ENCODE measurements at regions of chr17 and their contacts with region 1.

Region 1: DNA sequence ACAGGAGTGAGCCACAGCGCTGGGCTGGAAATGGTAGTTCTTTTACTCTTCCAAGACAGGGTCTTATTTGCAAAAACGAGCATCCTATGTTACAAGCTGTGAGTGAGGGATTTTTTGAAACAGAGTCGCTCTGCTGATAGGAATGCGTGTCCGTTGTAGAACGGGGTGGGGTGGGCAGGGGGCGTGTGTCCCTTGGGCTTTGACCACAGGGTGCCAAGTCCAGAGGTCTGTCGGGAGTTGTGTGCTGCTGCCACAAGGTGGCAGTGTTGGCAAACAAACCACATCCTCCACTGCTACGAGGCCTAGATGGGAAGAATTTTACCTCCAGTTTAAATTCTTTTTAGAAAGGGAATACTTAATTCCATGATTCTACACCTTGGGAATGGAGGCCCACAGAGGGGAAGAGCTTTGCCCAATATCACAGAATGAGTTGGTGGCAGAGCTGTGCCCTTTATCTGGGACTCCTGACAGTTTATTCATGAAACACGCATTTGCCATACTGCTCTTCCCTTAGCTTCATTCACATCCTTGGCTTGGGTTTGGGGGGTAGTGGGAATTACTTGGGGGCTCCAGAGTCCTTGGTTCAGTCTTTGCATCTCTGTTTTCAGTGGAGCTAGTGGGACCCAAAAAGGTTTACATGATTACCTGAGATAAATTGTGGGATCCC is 30.6 kb upstream of the ETV4 start:
- DNase-seq: peak; percentile 52
- ATAC-seq: peak; percentile 83
- H3K4me3 ChIP-seq: no peak overlapping the region
- H3K27ac ChIP-seq: no peak overlapping the region
- H3K4me1 ChIP-seq: peaks cover 19% of the 10 kb centered on the region
- H3K27me3 ChIP-seq: no peaks in the 10 kb centered on the region
- CTCF ChIP-seq: peak; percentile 84

Region 2: GRCh38 chr17:43546319-43547188 is 30.1 kb before region 1 on chr17 and contains the start of gene ETV4:
- CTCF ChIA-PET with region 1: no interaction called
- POLR2A ChIA-PET with region 1: no interaction called
- in situ Hi-C with region 1: no loop called
- intact Hi-C with region 1: no loop called
- DNase-seq: no peak
- ATAC-seq: peak; percentile 90
- H3K4me3 ChIP-seq: peak within 1 kb of the TSS; percentile 54 to 63
- H3K27ac ChIP-seq: no peak within 1 kb of the TSS
- H3K4me1 ChIP-seq: peaks cover 9% of the 10 kb centered on the region; the same call in 1 of the 2 replicates
- H3K27me3 ChIP-seq: no peaks in the 10 kb centered on the region
- CTCF ChIP-seq: no peak
- total RNA-seq, gene ETV4: 8.3 TPM

Region 3: DNA sequence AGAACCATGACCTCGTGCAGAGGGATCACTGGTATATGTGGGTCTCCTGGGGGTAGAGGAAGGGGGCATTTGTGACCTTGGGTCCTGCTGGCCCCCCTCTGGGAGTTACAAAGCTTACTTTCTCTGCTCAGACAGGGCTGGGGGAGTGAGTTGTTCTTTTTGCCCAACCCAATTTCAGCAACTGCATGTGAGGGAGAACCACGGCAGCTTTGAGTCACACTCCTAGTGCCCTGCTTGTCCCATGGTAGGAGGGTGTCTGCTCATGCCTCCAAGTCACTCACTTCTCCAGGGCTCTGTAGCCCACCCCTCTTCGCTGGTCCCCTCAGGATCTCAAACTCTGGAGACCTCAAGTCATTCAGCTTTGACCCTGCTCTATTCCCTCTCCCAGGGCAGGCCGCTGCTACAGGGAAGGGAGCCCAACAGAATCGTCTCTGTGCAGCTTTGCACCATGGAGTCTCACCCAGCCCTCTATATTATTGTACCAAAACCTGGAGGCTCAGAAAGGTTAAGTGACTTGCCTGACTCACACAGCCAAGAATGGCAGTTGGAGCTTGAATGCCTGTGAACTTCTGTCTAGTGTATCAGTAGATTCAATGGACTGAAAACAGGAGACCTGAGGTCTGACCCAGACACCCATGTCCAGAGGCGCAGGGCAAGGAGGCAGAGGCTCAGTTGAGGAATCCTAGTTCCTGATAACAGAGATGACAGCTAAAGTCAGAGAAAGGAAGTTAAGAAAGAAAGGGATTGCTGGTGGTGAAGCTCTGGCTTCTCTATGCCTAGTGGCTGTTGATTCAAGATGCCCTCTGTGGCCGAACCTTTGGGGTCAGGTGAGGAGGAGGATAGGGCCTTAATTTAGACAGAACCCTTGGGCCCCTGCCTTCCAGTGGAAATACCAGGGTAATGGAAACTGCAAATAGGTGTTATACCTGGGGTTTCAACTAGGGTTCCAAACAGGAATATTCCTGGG is 16.0 kb before region 1 on chr17:
- CTCF ChIA-PET with region 1: no interaction called
- POLR2A ChIA-PET with region 1: interaction called, 10 read pairs
- in situ Hi-C with region 1: no loop called
- intact Hi-C with region 1: no loop called
- DNase-seq: no peak
- ATAC-seq: no peak
- H3K4me3 ChIP-seq: no peak overlapping the region
- H3K27ac ChIP-seq: no peak overlapping the region
- H3K4me1 ChIP-seq: no peaks in the 10 kb centered on the region
- H3K27me3 ChIP-seq: no peaks in the 10 kb centered on the region
- CTCF ChIP-seq: no peak

Region 4: DNA sequence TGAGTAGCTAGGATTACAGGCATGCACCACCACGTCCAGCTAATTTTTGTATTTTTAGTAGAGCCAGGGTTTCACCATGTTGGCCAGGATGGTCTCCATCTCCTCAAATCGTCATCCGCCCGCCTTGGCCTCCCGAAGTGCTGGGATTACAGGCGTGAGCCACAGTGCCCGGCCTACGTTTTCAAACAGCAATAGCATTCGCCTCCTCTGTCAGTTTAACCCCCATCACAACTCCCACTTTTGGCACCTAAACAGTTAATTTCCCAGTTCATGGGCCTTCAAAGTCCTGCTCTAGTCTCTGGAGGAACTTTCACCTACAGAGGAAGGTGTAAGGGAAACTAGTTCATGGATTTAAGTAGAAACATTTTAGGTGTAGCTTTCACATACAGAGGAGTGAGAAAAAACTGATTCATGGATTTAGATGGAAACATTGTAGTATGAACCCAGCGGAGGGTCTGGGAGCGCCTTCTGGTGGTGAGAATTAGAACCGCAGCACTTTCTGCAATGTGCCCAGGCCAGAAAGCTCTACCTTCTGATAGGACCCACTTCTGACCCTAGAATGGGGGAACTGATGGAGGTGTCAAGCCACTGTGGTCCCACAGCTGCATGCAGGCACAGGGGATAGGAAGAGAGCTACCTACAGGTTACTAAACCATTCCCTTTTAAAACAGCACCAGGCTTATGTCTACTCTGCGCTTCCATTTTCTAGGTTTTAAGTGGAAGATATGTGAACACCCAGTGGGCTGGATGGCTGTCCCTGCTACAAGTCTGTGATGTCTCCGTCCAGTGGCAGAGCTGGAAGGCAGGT is 97.0 kb after region 1 on chr17:
- CTCF ChIA-PET with region 1: interaction called, 17 read pairs
- POLR2A ChIA-PET with region 1: no interaction called
- in situ Hi-C with region 1: no loop called
- intact Hi-C with region 1: loop called (anchors 1 kb)
- DNase-seq: peak; percentile 51
- ATAC-seq: peak; percentile 72
- H3K4me3 ChIP-seq: no peak overlapping the region
- H3K27ac ChIP-seq: no peak overlapping the region
- H3K4me1 ChIP-seq: peaks cover 22% of the 10 kb centered on the region
- H3K27me3 ChIP-seq: no peaks in the 10 kb centered on the region
- CTCF ChIP-seq: peak; percentile 92

Region 5: GRCh38 chr17:43680461-43680860 is 103.8 kb after region 1 on chr17:
- CTCF ChIA-PET with region 1: interaction called, 4 read pairs
- POLR2A ChIA-PET with region 1: interaction called, 16 read pairs
- in situ Hi-C with region 1: no loop called
- intact Hi-C with region 1: no loop called
- DNase-seq: no peak
- ATAC-seq: no peak
- H3K4me3 ChIP-seq: no peak overlapping the region
- H3K27ac ChIP-seq: no peak overlapping the region
- H3K4me1 ChIP-seq: peaks cover 7% of the 10 kb centered on the region
- H3K27me3 ChIP-seq: no peaks in the 10 kb centered on the region
- CTCF ChIP-seq: no peak

Measured in Panc1 (cell line).